Caco-2 (cell line): ENCODE measurements at regions of chr7 and their contacts with region 1.

Region 1: DNA sequence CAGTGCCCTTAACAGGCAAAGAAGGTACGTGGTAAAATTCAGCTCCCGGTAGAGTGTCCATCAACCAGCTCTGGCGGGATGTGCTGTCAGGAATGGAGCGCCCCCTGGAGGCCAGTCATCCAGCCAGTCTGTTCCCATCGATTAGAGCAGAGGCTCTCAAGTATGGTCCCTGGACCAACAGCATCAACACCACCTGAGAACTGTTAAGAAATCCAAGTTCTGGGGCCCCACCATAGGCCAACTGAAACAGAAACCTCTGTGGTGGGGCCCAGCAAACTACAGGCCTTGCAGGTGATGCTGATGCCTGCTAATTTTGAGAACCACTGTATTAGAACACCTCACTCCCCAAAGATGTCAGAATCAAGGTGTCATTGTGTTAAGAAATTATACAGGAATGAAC is 109.2 kb downstream of the DPY19L1 start:
- DNase-seq: peak; percentile 68 to 78
- H3K4me3 ChIP-seq: no peak overlapping the region
- H3K4me3 Mint-ChIP-seq: no peak overlapping the region
- H3K27ac Mint-ChIP-seq: no peak overlapping the region
- H3K4me1 ChIP-seq: no peaks in the 10 kb centered on the region
- H3K4me1 Mint-ChIP-seq: no peaks in the 10 kb centered on the region
- H3K27me3 ChIP-seq: no peaks in the 10 kb centered on the region
- H3K27me3 Mint-ChIP-seq: peaks cover 2% of the 10 kb centered on the region
- CTCF ChIP-seq: peak; percentile 70 to 71

Region 2: GRCh38 chr7:34321000-34321581 is 607.0 kb before region 1 on chr7:
- CTCF ChIA-PET with region 1: interaction called, 4 read pairs
- POLR2A ChIA-PET with region 1: no interaction called
- intact Hi-C with region 1: loop called (anchors 5 kb)
- DNase-seq: peak; percentile 73 to 76
- H3K4me3 ChIP-seq: no peak overlapping the region
- H3K4me3 Mint-ChIP-seq: peak overlapping the region; percentile 17
- H3K27ac Mint-ChIP-seq: no peak overlapping the region
- H3K4me1 ChIP-seq: no peaks in the 10 kb centered on the region
- H3K4me1 Mint-ChIP-seq: no peaks in the 10 kb centered on the region
- H3K27me3 ChIP-seq: no peaks in the 10 kb centered on the region
- H3K27me3 Mint-ChIP-seq: no peaks in the 10 kb centered on the region
- CTCF ChIP-seq: peak; percentile 88

Region 3: GRCh38 chr7:34675749-34676374 is 252.2 kb before region 1 on chr7:
- CTCF ChIA-PET with region 1: no interaction called
- POLR2A ChIA-PET with region 1: no interaction called
- intact Hi-C with region 1: loop called (anchors 2 kb)
- DNase-seq: peak in 1 of 2 experiments; percentile 35
- H3K4me3 ChIP-seq: no peak overlapping the region
- H3K4me3 Mint-ChIP-seq: no peak overlapping the region
- H3K27ac Mint-ChIP-seq: no peak overlapping the region
- H3K4me1 ChIP-seq: no peaks in the 10 kb centered on the region
- H3K4me1 Mint-ChIP-seq: peaks cover 6% of the 10 kb centered on the region
- H3K27me3 ChIP-seq: no peaks in the 10 kb centered on the region
- H3K27me3 Mint-ChIP-seq: no peaks in the 10 kb centered on the region
- CTCF ChIP-seq: peak; percentile 47 to 81

Region 4: GRCh38 chr7:34759452-34760125 is 168.5 kb before region 1 on chr7:
- CTCF ChIA-PET with region 1: no interaction called
- POLR2A ChIA-PET with region 1: no interaction called
- intact Hi-C with region 1: loop called (anchors 1 kb)
- DNase-seq: peak in 1 of 2 experiments; percentile 24
- H3K4me3 ChIP-seq: no peak overlapping the region
- H3K4me3 Mint-ChIP-seq: no peak overlapping the region
- H3K27ac Mint-ChIP-seq: no peak overlapping the region
- H3K4me1 ChIP-seq: no peaks in the 10 kb centered on the region; the same call in 1 of the 2 replicates
- H3K4me1 Mint-ChIP-seq: peaks cover 11% of the 10 kb centered on the region
- H3K27me3 ChIP-seq: no peaks in the 10 kb centered on the region
- H3K27me3 Mint-ChIP-seq: no peaks in the 10 kb centered on the region
- CTCF ChIP-seq: peak; percentile 36 to 49

Region 5: GRCh38 chr7:34776739-34777358 is 151.2 kb before region 1 on chr7:
- CTCF ChIA-PET with region 1: no interaction called
- POLR2A ChIA-PET with region 1: no interaction called
- intact Hi-C with region 1: no loop called
- DNase-seq: no peak
- H3K4me3 ChIP-seq: no peak overlapping the region
- H3K4me3 Mint-ChIP-seq: no peak overlapping the region
- H3K27ac Mint-ChIP-seq: no peak overlapping the region
- H3K4me1 ChIP-seq: no peaks in the 10 kb centered on the region
- H3K4me1 Mint-ChIP-seq: no peaks in the 10 kb centered on the region
- H3K27me3 ChIP-seq: no peaks in the 10 kb centered on the region
- H3K27me3 Mint-ChIP-seq: no peaks in the 10 kb centered on the region
- CTCF ChIP-seq: no peak

Region 6: DNA sequence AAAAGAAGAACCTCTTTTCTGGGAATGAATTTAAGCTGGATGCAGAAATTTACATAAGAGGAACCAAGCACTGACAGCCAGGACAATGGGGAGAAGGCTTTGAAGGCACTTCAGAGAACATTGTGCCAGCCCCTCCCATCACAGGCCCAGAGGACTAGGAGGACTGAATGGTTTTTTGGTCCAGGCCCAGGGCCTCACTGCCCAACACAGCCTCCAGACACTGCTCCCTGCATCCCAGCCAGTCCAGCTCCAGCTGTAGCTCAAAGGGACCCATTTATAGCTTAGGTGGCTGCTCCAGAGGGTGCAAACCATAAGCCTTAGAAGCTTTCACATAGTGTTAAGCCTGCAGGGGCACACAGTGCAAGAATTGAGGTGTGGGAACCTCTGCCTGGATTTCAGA is 32.8 kb before region 1 on chr7:
- CTCF ChIA-PET with region 1: no interaction called
- POLR2A ChIA-PET with region 1: no interaction called
- intact Hi-C with region 1: no loop called
- DNase-seq: no peak
- H3K4me3 ChIP-seq: no peak overlapping the region
- H3K4me3 Mint-ChIP-seq: no peak overlapping the region
- H3K27ac Mint-ChIP-seq: no peak overlapping the region
- H3K4me1 ChIP-seq: no peaks in the 10 kb centered on the region
- H3K4me1 Mint-ChIP-seq: no peaks in the 10 kb centered on the region
- H3K27me3 ChIP-seq: no peaks in the 10 kb centered on the region
- H3K27me3 Mint-ChIP-seq: peaks cover 8% of the 10 kb centered on the region
- CTCF ChIP-seq: no peak

Region 7: GRCh38 chr7:34973400-34973760 is 45.3 kb after region 1 on chr7:
- CTCF ChIA-PET with region 1: no interaction called
- POLR2A ChIA-PET with region 1: no interaction called
- intact Hi-C with region 1: no loop called
- DNase-seq: no peak
- H3K4me3 ChIP-seq: no peak overlapping the region
- H3K4me3 Mint-ChIP-seq: no peak overlapping the region
- H3K27ac Mint-ChIP-seq: no peak overlapping the region
- H3K4me1 ChIP-seq: no peaks in the 10 kb centered on the region
- H3K4me1 Mint-ChIP-seq: no peaks in the 10 kb centered on the region
- H3K27me3 ChIP-seq: no peaks in the 10 kb centered on the region
- H3K27me3 Mint-ChIP-seq: no peaks in the 10 kb centered on the region
- CTCF ChIP-seq: no peak